Ascending aorta (tissue), 2 donors: ENCODE measurements at regions of chr3 and their contacts with region 1.

Region 1: GRCh38 chr3:30606301-30607031 is at the start of gene TGFBR2:
- DNase-seq: peak; percentile 85 to 97
- H3K4me3 ChIP-seq: peak within 1 kb of the TSS; percentile 90 to 93
- H3K27ac ChIP-seq: peak within 1 kb of the TSS; percentile 98
- H3K4me1 ChIP-seq: peaks cover 0 to 11% of the 10 kb centered on the region in 2 donors
- H3K27me3 ChIP-seq: no peaks in the 10 kb centered on the region
- CTCF ChIP-seq: peak in 1 of 3 experiments; percentile 41
- total RNA-seq, gene TGFBR2: 343 TPM

Region 2: GRCh38 chr3:30440147-30440604 is 166.3 kb before region 1 on chr3:
- intact Hi-C with region 1: loop called (anchors 5 kb)
- DNase-seq: no peak
- H3K4me3 ChIP-seq: no peak overlapping the region
- H3K27ac ChIP-seq: peak overlapping the region; percentile 83 to 85
- H3K4me1 ChIP-seq: peaks cover 7 to 75% of the 10 kb centered on the region in 2 donors
- H3K27me3 ChIP-seq: no peaks in the 10 kb centered on the region
- CTCF ChIP-seq: no peak

Region 3: DNA sequence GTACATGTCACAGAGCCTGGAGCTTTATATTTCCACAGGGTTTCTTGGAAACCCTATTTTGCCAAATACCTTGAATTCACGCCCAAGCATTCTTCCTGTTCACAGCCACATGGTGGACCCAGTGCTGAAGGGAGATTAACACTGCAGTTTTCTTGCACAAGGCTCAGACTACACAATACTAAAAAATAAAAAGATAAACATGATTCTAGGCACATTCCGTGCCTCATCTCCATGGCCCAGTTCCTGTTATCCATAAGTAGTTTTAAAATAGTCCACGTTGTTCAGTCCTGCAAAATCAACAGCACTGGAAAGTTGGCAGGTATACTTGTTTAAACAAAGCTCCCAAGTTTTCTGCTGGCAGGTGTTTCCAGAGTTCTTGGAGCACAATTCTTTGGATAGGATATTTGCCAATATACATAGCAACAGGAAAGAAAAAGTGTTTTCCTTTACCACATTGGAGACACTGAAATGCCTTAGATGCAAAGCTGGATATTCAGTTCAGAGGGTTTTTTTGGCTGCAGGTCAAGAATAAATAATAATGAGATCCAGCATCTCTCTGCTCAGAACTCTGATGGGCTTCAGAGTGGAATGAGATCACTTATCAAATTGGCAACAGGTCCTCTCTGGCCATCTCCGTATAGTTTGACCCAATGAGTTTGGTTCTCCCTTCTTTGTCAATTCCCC is 88.1 kb before region 1 on chr3:
- intact Hi-C with region 1: loop called (anchors 2 kb)
- DNase-seq: peak in 1 of 2 donors; percentile 89
- H3K4me3 ChIP-seq: no peak overlapping the region
- H3K27ac ChIP-seq: peak overlapping the region; percentile 72
- H3K4me1 ChIP-seq: peaks cover 3 to 33% of the 10 kb centered on the region in 2 donors
- H3K27me3 ChIP-seq: no peaks in the 10 kb centered on the region
- CTCF ChIP-seq: peak in 2 of 3 experiments; percentile 14 to 31

Region 4: GRCh38 chr3:30658328-30659052 is 52.0 kb after region 1 on chr3:
- intact Hi-C with region 1: loop called (anchors 2 kb)
- DNase-seq: no peak
- H3K4me3 ChIP-seq: peak overlapping the region in 1 of 2 donors; percentile 41
- H3K27ac ChIP-seq: peak overlapping the region; percentile 62 to 72
- H3K4me1 ChIP-seq: peaks cover 38 to 69% of the 10 kb centered on the region in 2 donors
- H3K27me3 ChIP-seq: no peaks in the 10 kb centered on the region
- CTCF ChIP-seq: no peak

Region 5: DNA sequence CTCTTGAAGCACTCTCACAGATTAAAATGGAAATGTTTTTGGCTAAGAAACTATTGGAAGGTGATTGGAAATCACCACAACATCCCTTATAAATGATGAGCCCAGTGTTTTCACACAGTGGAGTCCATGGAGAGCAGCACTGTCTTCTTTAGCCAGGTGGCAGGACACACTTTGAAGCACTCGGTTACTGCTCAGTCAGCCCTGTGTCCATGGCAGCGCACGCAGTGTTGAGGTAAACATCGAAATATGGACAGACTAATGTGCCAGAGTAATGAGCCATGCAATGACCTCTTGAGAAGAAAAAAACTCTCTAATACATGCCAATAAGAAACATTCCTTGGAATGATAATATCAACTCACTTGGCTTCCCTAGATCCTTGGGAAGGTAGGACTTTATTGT is 66.5 kb after region 1 on chr3:
- intact Hi-C with region 1: no loop called
- DNase-seq: no peak
- H3K4me3 ChIP-seq: no peak overlapping the region
- H3K27ac ChIP-seq: peak overlapping the region; percentile 10 to 14
- H3K4me1 ChIP-seq: peaks cover 0 to 18% of the 10 kb centered on the region in 2 donors
- H3K27me3 ChIP-seq: no peaks in the 10 kb centered on the region
- CTCF ChIP-seq: no peak